Activated CD4-positive, alpha-beta T cell treated with anti-CD3 and anti-CD28 coated beads, Interleukin-2, amount 10 ng/mL, durations not matched to agents 24 days and 14 days (primary cell): ENCODE measurements at regions of chr5 and their contacts with region 1.

Region 1: GRCh38 chr5:181191529-181192394 is 13.2 kb downstream of the TRIM7 start:
- DNase-seq: peak; percentile 99
- H3K4me3 Mint-ChIP-seq: peak overlapping the region; percentile 92
- H3K27ac Mint-ChIP-seq: peak overlapping the region; percentile 95
- H3K4me1 Mint-ChIP-seq: peaks cover 40% of the 10 kb centered on the region
- H3K27me3 Mint-ChIP-seq: peaks cover 10% of the 10 kb centered on the region

Region 2: DNA sequence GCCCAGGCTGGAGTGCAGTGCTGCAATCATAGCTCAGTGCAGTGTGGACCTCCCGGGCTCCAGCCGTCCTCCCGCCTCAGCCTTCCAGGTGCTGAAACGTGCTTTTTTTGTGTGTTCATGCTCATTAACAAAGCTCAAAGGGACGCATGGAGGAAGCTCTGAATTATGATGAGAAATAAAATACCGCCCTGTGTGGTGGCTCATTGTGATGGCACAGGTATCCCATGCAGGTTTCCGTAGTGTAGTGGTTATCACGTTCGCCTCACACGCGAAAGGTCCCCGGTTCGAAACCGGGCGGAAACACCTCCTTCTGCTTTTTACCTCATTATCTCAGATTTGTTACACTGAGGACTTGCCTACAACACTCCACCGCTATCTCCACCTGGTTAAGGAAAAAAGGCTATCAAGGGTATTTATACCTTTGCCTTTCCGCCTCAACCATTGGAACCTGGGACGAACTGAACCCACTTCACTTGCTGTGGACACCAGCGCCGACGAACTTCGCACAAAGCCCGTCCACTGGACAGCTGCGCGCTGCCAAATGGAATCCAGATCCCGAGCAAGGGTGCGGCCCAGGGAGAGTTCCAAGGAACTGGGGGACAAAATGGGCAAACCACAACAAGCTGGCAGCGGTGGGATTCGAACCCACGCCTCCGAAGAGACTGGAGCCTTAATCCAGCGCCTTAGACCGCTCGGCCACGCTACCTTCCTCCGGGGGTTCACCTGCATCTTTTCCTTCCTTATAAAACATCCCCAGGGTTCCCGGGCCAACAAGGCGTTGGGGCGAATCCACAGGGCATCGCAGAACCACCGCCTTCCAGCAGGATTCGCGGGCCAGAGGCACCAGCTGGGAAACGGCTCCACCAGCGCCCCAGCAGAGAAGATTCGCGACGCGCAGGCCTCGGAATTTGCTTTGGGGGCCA is 18.1 kb before region 1 on chr5:
- intact Hi-C with region 1: loop called (anchors 2 kb)
- DNase-seq: peak; percentile 88
- H3K4me3 Mint-ChIP-seq: peak overlapping the region; percentile 85
- H3K27ac Mint-ChIP-seq: peak overlapping the region; percentile 91
- H3K4me1 Mint-ChIP-seq: peaks cover 37% of the 10 kb centered on the region
- H3K27me3 Mint-ChIP-seq: peaks cover 43% of the 10 kb centered on the region

Region 3: GRCh38 chr5:181243512-181244343 is 52.0 kb after region 1 on chr5 and contains the start of gene RACK1:
- intact Hi-C with region 1: loop called (anchors 1 kb)
- DNase-seq: peak; percentile 96
- H3K4me3 Mint-ChIP-seq: peak within 1 kb of the TSS; percentile 98
- H3K27ac Mint-ChIP-seq: peak within 1 kb of the TSS; percentile 99
- H3K4me1 Mint-ChIP-seq: peaks cover 49% of the 10 kb centered on the region
- H3K27me3 Mint-ChIP-seq: no peaks in the 10 kb centered on the region
- total RNA-seq, gene RACK1: 2,172 and 2,196 TPM in 2 replicates